Activated B cell treated with CpG ODN at 0.5 μM for 24 hours (primary cell): ENCODE measurements at regions of chr2 and their contacts with region 1.

Region 1: DNA sequence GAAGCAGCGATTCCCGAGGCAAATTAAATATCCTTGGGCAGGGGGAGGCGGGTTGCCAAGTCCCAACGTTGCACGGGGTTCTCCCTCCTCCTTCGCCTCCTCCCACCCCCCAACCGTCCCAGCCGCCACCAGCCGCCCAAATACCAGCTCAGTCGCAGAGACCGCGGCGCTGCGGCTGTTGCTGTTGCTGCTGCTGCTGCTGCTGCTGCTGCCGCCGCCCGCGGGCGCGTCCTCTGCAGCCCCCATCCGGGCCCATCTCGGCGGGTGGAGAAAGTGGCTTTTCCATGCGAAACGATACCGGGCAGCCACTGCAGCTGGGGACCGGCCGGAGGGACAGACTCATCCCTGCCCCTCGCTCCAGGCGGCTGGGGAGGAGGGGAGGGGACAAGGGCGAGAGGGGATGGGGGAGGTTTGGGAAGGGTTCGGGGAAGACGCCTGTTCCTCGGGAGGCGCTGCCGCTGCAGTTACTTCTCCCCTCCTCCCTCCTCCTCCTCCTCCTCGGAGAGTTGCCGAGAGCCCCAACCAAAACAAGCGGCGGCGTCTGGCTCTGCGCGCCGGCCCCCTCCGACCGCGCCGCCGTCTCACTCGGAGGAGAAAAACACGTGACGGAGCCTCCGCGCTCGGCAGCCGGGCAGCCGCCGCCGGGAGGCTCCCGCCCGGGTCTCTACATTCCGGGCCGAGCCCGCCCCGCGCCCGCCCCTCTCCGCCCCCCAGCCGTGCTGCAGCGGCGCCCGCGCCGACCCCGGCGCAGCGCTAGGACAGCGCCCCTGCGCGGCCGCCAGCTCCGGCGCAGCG is at the start of gene IRS1:
- DNase-seq: peak; percentile 59
- ATAC-seq: peak; percentile 47
- H3K4me3 Mint-ChIP-seq: peak within 1 kb of the TSS; percentile 92
- H3K27ac Mint-ChIP-seq: peak within 1 kb of the TSS; percentile 77
- H3K4me1 Mint-ChIP-seq: peaks cover 38% of the 10 kb centered on the region
- H3K27me3 Mint-ChIP-seq: peaks cover under 1% of the 10 kb centered on the region
- CTCF ChIP-seq: no peak
- total RNA-seq, gene IRS1: 3.2 and 3.6 TPM in 2 replicates

Region 2: DNA sequence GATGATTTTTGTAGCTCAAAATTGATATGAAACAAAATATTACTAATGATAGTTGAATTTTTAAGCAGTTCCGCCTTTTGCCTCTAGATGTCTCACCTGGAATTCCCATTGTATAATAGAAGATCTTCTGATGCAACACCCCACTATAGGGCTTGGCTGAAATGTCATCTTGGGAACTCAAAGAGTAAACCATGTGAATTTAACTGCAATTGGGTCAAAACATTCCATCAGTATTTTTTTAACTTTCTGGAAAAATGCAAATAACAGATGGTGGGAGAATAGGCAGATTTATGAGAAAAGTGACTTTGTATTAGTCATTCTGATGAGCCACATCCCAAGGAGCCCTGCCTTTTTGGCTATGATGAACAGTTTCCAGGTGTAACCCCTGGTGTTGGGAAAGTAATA is 909.9 kb before region 1 on chr2:
- CTCF ChIA-PET with region 1: interaction called, 59 read pairs
- POLR2A ChIA-PET with region 1: interaction called, 5 read pairs
- intact Hi-C with region 1: loop called (anchors 1 kb)
- DNase-seq: no peak
- ATAC-seq: peak; percentile 47
- H3K4me3 Mint-ChIP-seq: no peak overlapping the region
- H3K27ac Mint-ChIP-seq: no peak overlapping the region
- H3K4me1 Mint-ChIP-seq: no peaks in the 10 kb centered on the region
- H3K27me3 Mint-ChIP-seq: peaks cover 4% of the 10 kb centered on the region
- CTCF ChIP-seq: no peak

Region 3: GRCh38 chr2:226215902-226216503 is 583.4 kb before region 1 on chr2:
- CTCF ChIA-PET with region 1: interaction called, 19 read pairs
- POLR2A ChIA-PET with region 1: interaction called, 4 read pairs
- intact Hi-C with region 1: loop called (anchors 1 kb)
- DNase-seq: peak; percentile 15
- ATAC-seq: peak; percentile 69
- H3K4me3 Mint-ChIP-seq: no peak overlapping the region
- H3K27ac Mint-ChIP-seq: no peak overlapping the region
- H3K4me1 Mint-ChIP-seq: no peaks in the 10 kb centered on the region
- H3K27me3 Mint-ChIP-seq: peaks cover 2% of the 10 kb centered on the region
- CTCF ChIP-seq: no peak

Region 4: DNA sequence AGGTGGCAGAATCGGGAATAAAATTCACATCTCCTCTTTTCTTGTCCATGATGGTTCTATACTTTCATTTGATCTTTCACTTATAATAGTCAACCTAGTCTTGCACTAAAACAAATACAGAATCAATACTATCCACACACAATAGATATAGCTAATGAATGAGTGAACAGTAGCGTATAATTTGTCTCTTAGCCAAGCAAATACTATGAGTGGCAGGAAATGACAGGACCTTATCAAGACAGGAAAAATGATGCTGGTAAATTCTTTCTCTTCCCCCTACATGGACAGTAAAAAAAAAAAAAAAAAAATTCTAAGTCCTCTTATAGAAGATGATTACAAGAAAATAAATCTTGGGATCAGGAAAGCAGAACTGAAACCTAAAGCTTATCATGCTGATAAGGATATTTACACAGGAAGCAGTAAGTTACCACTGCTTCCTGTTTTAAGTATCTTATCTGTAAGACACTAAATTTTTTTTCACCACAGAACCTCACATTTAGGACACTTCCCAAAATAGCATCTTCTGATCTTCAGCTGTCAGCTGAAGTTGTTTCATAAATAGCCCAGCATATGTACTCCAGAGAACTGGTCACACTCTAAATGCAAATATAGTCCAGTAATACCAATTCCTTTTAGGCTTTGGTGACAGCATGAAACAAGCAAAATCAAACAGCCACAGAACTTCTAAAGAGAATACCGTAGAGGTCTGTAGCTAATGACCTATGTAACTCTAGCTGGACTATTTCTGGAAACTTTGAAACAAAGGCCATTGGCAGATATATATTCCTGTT is 26.8 kb before region 1 on chr2:
- CTCF ChIA-PET with region 1: interaction called, 4 read pairs
- POLR2A ChIA-PET with region 1: interaction called, 8 read pairs
- intact Hi-C with region 1: loop called (anchors 1 kb)
- DNase-seq: no peak
- ATAC-seq: peak; percentile 83
- H3K4me3 Mint-ChIP-seq: peak overlapping the region; percentile 35
- H3K27ac Mint-ChIP-seq: peak overlapping the region; percentile 71
- H3K4me1 Mint-ChIP-seq: peaks cover 49% of the 10 kb centered on the region
- H3K27me3 Mint-ChIP-seq: no peaks in the 10 kb centered on the region
- CTCF ChIP-seq: no peak

Region 5: GRCh38 chr2:226828191-226828590 is 28.8 kb after region 1 on chr2:
- CTCF ChIA-PET with region 1: interaction called, 10 read pairs
- POLR2A ChIA-PET with region 1: interaction called, 7 read pairs
- intact Hi-C with region 1: no loop called
- DNase-seq: no peak
- ATAC-seq: no peak
- H3K4me3 Mint-ChIP-seq: no peak overlapping the region
- H3K27ac Mint-ChIP-seq: no peak overlapping the region
- H3K4me1 Mint-ChIP-seq: peaks cover 20% of the 10 kb centered on the region
- H3K27me3 Mint-ChIP-seq: no peaks in the 10 kb centered on the region
- CTCF ChIP-seq: no peak

Region 6: DNA sequence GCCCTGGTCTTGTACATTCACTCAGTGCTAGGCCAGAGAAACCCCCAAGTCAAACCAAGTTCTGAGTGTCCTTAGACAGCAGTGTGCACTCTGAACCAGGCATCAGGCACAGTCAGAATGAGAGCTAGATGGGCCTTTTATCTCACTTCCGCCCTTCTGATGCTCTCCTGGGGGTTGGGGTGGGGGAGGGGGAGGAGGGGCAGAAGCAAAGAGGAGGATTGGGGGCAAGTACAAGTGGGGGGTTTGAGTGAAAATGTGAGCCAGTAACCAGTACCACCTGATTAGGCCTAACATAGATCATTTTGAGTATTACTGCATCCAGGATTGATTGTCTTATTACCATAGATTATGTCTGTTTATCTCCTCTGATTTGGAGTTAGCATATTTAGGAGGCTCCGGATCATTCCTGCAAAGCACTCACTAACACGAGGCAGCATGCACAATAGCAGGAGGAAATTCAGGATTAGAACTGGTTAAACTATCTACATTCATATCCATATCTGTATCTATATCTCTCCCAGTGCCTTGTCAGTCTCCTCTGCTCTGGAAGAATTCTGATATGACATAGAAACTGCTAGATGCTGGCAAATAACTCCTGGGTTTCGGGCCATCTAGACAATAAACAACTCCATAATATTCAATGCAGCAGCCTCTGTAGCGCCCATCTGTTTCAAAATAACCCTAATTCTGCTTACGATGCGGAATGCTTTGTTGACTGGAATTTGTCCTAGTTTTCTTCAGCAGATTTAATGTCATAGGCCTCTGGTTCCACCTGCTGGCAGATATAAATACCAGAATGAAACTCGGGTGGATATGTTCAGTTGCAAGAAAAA is 185.6 kb after region 1 on chr2:
- CTCF ChIA-PET with region 1: interaction called, 39 read pairs
- POLR2A ChIA-PET with region 1: interaction called, 4 read pairs
- intact Hi-C with region 1: loop called (anchors 1 kb)
- DNase-seq: no peak
- ATAC-seq: peak; percentile 92
- H3K4me3 Mint-ChIP-seq: no peak overlapping the region
- H3K27ac Mint-ChIP-seq: peak overlapping the region; percentile 80
- H3K4me1 Mint-ChIP-seq: peaks cover 24% of the 10 kb centered on the region
- H3K27me3 Mint-ChIP-seq: no peaks in the 10 kb centered on the region
- CTCF ChIP-seq: peak; percentile 28

Region 7: DNA sequence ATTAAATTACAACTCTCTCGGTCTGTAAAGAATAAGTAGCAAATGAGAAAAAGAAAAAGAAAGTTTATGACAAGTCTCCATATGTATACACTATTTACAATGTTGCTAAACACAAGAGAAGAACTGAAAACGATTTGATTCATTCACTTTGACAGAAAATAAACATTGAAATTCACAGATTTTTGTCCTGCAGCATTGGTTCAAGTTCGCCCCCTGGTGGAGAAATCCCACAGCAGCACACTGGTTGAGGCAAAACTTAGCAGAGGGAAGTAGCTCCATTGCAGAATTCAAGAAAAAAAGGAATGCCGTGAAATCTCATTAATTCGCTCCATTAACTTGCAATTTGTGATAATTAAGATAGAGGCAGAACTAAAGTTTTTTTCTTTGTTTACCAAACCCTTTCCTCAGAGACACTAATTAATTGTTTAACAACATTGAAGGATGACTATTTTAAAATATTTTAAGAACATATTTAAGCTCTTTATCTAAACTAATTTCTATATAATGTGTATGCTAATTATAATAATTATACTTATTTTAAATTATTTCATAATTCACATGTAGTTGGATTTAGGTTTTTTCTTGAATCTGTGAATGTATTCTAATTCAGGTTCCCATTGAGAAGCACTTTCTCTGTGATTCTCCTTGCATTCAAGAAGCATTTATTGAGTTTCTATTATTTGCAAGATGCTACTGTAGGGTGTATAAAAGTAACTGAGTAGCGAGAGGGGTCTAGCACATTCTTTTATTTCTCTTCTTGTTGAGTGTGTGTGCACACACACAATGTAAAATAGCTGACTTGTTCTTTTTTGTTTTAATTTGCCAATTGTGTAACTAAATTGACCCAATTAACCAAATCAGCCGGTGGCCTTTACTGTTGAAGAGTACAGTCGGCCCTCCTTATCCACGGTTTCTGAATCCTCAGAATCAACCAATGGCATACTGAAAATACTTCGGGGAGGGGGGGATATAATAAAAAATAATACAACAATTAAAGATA is 439.2 kb after region 1 on chr2:
- CTCF ChIA-PET with region 1: interaction called, 5 read pairs
- POLR2A ChIA-PET with region 1: no interaction called
- intact Hi-C with region 1: loop called (anchors 10 kb)
- DNase-seq: peak; percentile 28
- ATAC-seq: peak; percentile 37
- H3K4me3 Mint-ChIP-seq: no peak overlapping the region
- H3K27ac Mint-ChIP-seq: no peak overlapping the region
- H3K4me1 Mint-ChIP-seq: no peaks in the 10 kb centered on the region
- H3K27me3 Mint-ChIP-seq: no peaks in the 10 kb centered on the region
- CTCF ChIP-seq: peak; percentile 99